Calu3 (cell line): ENCODE measurements at regions of chr16 and their contacts with region 1.

Region 1: GRCh38 chr16:86563489-86564345 is 2.9 kb upstream of the FOXC2 start:
- DNase-seq: peak; percentile 94
- H3K4me3 Mint-ChIP-seq: peak overlapping the region; percentile 56
- H3K27ac Mint-ChIP-seq: no peak overlapping the region
- H3K4me1 Mint-ChIP-seq: peaks cover 17% of the 10 kb centered on the region
- H3K27me3 Mint-ChIP-seq: peaks cover 40% of the 10 kb centered on the region
- CTCF ChIP-seq: peak; percentile 100

Region 2: DNA sequence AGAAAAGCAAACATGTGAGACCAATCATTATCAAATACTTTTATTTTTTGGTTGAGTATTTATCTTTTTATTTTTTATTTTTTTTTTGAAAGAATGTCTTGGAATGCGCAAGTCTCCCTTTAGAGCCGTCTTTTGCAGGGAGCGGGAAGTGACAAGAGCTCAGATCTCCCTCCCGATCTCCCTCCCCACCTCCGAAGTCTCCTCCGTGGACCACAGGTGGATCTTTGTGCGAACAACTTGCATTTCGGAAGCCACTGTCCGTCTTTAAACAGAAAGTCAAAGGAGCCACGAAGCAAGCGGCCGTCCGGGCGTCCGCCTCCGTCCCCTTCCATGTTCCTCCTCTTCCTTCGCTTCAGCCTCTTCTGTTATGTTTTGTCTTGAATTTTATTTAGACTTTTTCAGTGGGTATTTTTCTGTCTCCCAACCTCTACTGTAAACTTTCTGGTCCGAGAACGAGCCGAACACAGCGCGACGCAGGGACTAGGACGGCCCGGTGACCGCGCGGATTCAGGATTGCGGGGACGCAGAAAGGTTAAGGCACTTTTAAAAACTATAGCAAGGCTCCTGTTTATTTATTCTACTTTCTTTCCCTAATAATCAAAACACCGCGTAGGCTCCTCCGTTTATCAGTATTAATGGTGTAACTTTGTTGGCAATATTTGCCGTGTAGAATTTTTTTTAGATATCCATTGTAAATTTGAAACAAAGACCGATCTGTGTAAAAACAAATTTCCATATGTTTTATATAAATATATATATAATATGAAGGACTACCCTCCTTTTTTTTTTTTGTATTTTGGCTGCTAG is 50.0 kb before region 1 on chr16:
- CTCF ChIA-PET with region 1: no interaction called
- intact Hi-C with region 1: no loop called
- DNase-seq: no peak
- H3K4me3 Mint-ChIP-seq: no peak overlapping the region
- H3K27ac Mint-ChIP-seq: no peak overlapping the region
- H3K4me1 Mint-ChIP-seq: no peaks in the 10 kb centered on the region
- H3K27me3 Mint-ChIP-seq: peaks cover 97% of the 10 kb centered on the region
- CTCF ChIP-seq: no peak

Region 3: GRCh38 chr16:86590501-86591144 is 26.9 kb after region 1 on chr16:
- CTCF ChIA-PET with region 1: no interaction called
- intact Hi-C with region 1: no loop called
- DNase-seq: peak; percentile 39
- H3K4me3 Mint-ChIP-seq: no peak overlapping the region
- H3K27ac Mint-ChIP-seq: peak overlapping the region; percentile 12
- H3K4me1 Mint-ChIP-seq: peaks cover 13% of the 10 kb centered on the region
- H3K27me3 Mint-ChIP-seq: peaks cover 9% of the 10 kb centered on the region
- CTCF ChIP-seq: no peak

Region 4: GRCh38 chr16:86747761-86748160 is 184.0 kb after region 1 on chr16:
- CTCF ChIA-PET with region 1: no interaction called
- intact Hi-C with region 1: no loop called
- DNase-seq: no peak
- H3K4me3 Mint-ChIP-seq: no peak overlapping the region
- H3K27ac Mint-ChIP-seq: no peak overlapping the region
- H3K4me1 Mint-ChIP-seq: peaks cover 20% of the 10 kb centered on the region
- H3K27me3 Mint-ChIP-seq: peaks cover 20% of the 10 kb centered on the region
- CTCF ChIP-seq: no peak

Region 5: DNA sequence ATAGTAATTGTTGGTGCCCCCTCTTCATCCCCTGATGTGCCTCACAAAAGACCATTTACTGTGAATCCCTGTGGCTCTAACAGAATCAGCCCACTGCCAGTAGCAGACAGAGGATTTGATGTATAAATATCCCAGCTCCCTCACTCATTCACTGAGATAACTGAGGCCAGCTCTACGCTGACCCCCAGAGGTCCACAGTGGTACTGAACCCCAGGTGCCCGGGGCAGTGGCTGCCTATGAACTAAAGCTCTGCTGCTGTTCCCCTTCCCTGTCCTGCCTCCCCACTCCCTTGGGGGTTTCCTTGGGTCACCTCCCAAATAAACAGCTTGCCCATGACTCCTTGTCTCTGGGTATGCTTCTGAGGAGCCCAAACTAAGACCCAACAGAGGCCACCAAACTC is 310.4 kb after region 1 on chr16:
- CTCF ChIA-PET with region 1: interaction called, 9 read pairs
- intact Hi-C with region 1: loop called (anchors 5 kb)
- DNase-seq: peak; percentile 67
- H3K4me3 Mint-ChIP-seq: no peak overlapping the region
- H3K27ac Mint-ChIP-seq: no peak overlapping the region
- H3K4me1 Mint-ChIP-seq: peaks cover 12% of the 10 kb centered on the region
- H3K27me3 Mint-ChIP-seq: peaks cover 75% of the 10 kb centered on the region
- CTCF ChIP-seq: peak; percentile 72

Region 6: DNA sequence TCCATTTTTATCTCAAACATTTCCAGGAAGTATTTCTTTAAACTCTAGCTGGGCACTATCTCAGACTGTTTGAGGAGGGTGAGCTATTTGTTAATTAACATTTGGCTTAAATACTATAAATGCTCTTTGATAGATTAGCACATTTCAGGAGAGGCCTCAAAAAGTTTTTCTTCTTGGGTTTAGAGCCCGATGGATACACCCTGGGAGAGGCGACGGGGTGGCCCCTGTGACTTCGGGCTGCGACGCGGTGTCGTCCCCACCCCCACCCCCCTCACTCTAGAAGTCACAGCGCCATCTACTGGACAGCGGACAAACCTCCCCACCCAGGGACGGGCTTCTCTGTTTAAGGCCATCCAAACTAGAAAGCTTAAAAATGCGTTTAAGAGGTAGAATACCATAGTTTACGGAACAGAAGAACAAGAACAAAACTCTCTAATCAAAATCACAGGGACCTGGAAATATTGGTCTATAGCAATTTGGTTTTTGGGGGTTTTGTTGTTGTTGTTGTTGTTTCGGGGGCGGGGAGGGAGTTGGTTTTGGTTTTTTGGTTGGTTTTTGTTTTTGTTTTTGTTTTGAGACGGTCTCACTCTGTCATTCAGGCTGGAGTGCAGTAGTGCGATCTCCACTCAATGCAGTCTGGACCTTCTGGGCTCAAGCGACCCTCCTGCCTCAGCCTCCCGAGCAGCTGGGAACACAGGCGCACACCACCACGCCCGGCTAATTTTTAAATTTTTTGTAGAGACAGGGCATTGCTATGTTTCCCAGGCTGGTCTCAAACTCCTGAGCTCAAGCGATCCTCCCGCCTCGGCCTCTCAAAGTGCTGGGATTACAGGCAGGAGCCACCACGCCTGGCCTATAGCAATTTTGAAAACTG is 499.1 kb after region 1 on chr16:
- CTCF ChIA-PET with region 1: interaction called, 22 read pairs
- intact Hi-C with region 1: loop called (anchors 1 kb)
- DNase-seq: peak; percentile 78
- H3K4me3 Mint-ChIP-seq: no peak overlapping the region
- H3K27ac Mint-ChIP-seq: no peak overlapping the region
- H3K4me1 Mint-ChIP-seq: no peaks in the 10 kb centered on the region
- H3K27me3 Mint-ChIP-seq: peaks cover 81% of the 10 kb centered on the region
- CTCF ChIP-seq: peak; percentile 85

Region 7: DNA sequence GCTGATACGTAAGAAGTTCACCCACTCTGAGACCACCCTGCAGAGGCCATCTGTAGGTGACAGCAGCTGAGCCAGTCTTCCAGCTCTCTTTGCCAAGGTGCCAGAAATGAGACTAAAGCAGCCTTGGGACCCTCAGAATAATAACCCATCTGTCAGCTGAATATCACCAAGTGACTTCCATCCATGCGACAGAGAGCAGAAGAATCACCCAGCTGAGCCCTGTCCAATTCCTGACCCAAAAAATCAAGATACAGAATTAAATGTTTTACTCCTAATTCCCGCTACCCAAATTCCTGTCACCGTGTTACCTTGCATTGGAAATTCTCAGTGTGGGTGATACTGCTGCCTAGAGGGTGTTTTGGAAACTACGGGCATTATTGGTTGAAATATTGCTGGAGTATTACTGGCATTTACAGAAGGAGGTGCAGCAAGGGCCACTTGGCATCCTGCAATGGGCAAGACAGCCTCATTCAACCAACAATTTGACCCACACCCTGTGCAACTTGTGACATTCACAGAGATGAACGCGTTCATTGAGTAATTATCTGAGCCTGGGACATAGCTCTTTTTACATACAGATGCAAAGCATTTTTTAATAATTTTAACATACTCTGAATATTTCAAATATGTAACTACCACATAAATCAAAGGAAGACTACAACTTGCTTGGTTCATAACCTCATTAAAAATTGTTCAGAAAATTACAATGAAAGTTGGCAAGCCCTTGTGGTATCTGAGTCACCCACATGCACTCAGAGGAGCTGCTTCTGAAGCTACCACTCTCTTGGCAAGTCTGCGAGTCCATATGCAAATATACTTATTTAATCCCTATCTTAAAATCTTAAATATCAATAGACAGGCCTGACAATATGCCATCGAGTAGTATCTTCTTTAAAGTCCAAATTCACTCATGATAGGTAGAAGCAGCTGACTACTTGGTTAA is 626.8 kb after region 1 on chr16:
- CTCF ChIA-PET with region 1: no interaction called
- intact Hi-C with region 1: loop called (anchors 5 kb)
- DNase-seq: no peak
- H3K4me3 Mint-ChIP-seq: no peak overlapping the region
- H3K27ac Mint-ChIP-seq: no peak overlapping the region
- H3K4me1 Mint-ChIP-seq: no peaks in the 10 kb centered on the region
- H3K27me3 Mint-ChIP-seq: peaks cover 34% of the 10 kb centered on the region
- CTCF ChIP-seq: peak; percentile 21